ENCODE measurements at regions of chr6 and their contacts with region 1.

Region 1: GRCh38 chr6:110873981-110874879 is at the start of gene AMD1:
- DNase-seq: peak; percentile 97 to 99
- ATAC-seq: peak; percentile 89 to 97 (median 94)
- H3K4me3 ChIP-seq: peak within 1 kb of the TSS; percentile 68 to 96 (median 91)
- H3K27ac ChIP-seq: peak within 1 kb of the TSS; percentile 84 to 97 (median 95)
- H3K4me1 ChIP-seq: peaks cover 0 to 42% (median 30%) of the 10 kb centered on the region in 9 donors
- H3K27me3 ChIP-seq: no peaks in the 10 kb centered on the region
- CTCF ChIP-seq: no peak
- total RNA-seq, gene AMD1: 38.0 to 101 (median 55.3) TPM

Region 2: GRCh38 chr6:110537208-110538123 is 336.8 kb before region 1 on chr6:
- intact Hi-C with region 1: loop called in 4 of 10 experiments (anchors 5 to 10 kb)
- DNase-seq: no peak
- ATAC-seq: peak in 5 of 8 donors; percentile 50 to 79 (median 70)
- H3K4me3 ChIP-seq: no peak overlapping the region
- H3K27ac ChIP-seq: peak overlapping the region in 7 of 10 donors; percentile 14 to 57 (median 47)
- H3K4me1 ChIP-seq: peaks cover 0 to 25% (median 10%) of the 10 kb centered on the region in 9 donors
- H3K27me3 ChIP-seq: no peaks in the 10 kb centered on the region
- CTCF ChIP-seq: no peak

Region 3: GRCh38 chr6:110815217-110816109 is 58.8 kb before region 1 on chr6 and contains the start of gene CDK19:
- intact Hi-C with region 1: loop called in 9 of 10 experiments (anchors 1 to 10 kb)
- DNase-seq: peak; percentile 97 to 98
- ATAC-seq: peak; percentile 96 to 99 (median 98)
- H3K4me3 ChIP-seq: peak within 1 kb of the TSS; percentile 70 to 97 (median 88)
- H3K27ac ChIP-seq: peak within 1 kb of the TSS; percentile 87 to 96 (median 94)
- H3K4me1 ChIP-seq: peaks cover 0 to 45% (median 16%) of the 10 kb centered on the region in 9 donors
- H3K27me3 ChIP-seq: no peaks in the 10 kb centered on the region
- CTCF ChIP-seq: no peak
- total RNA-seq, gene CDK19: 4.6 to 13.0 (median 8.7) TPM

Region 4: GRCh38 chr6:110944681-110945151 is 70.5 kb after region 1 on chr6:
- intact Hi-C with region 1: loop called in 1 of 10 experiments (anchors 10 kb)
- DNase-seq: no peak
- ATAC-seq: peak in 1 of 8 donors; percentile 57
- H3K4me3 ChIP-seq: no peak overlapping the region
- H3K27ac ChIP-seq: no peak overlapping the region
- H3K4me1 ChIP-seq: peaks cover 0 to 14% (median 0%) of the 10 kb centered on the region in 9 donors
- H3K27me3 ChIP-seq: no peaks in the 10 kb centered on the region
- CTCF ChIP-seq: no peak

Region 5: GRCh38 chr6:110981202-110981600 is 107.0 kb after region 1 on chr6:
- intact Hi-C with region 1: loop called in 1 of 10 experiments (anchors 10 kb)
- DNase-seq: no peak
- ATAC-seq: peak in 3 of 8 donors; percentile 2 to 16 (median 9)
- H3K4me3 ChIP-seq: peak overlapping the region; percentile 77 to 94 (median 82)
- H3K27ac ChIP-seq: peak overlapping the region in 9 of 10 donors; percentile 87 to 96 (median 93)
- H3K4me1 ChIP-seq: peaks cover 0 to 21% (median 13%) of the 10 kb centered on the region in 9 donors
- H3K27me3 ChIP-seq: no peaks in the 10 kb centered on the region
- CTCF ChIP-seq: no peak

Region 6: GRCh38 chr6:111096246-111096645 is 222.0 kb after region 1 on chr6:
- intact Hi-C with region 1: no loop called
- DNase-seq: no peak
- ATAC-seq: no peak
- H3K4me3 ChIP-seq: no peak overlapping the region
- H3K27ac ChIP-seq: no peak overlapping the region
- H3K4me1 ChIP-seq: no peaks in the 10 kb centered on the region
- H3K27me3 ChIP-seq: peaks cover 0 to 6% (median 0%) of the 10 kb centered on the region in 7 donors
- CTCF ChIP-seq: no peak

Region 7: DNA sequence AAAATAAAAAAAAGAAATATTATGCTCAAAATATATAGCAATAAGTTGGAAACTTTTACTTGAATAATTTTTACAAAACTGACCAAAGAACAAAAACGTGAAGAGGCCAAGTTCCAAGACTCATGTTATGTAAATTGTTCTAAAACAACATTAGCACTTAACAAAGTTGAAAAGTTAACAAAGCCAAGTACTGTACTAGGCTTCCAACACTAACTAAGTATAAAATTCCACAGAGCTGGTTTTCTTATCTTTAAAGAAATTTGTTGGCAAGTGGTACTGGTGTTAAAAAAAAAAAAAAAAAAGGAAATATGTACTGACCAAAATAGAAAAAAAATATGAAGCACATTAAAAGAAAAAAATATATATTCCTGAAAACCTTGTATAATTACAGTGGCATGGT is 340.9 kb after region 1 on chr6:
- intact Hi-C with region 1: no loop called
- DNase-seq: no peak
- ATAC-seq: no peak
- H3K4me3 ChIP-seq: no peak overlapping the region
- H3K27ac ChIP-seq: no peak overlapping the region
- H3K4me1 ChIP-seq: peaks cover 0 to 8% (median 0%) of the 10 kb centered on the region in 9 donors
- H3K27me3 ChIP-seq: no peaks in the 10 kb centered on the region
- CTCF ChIP-seq: no peak